CD4-positive, alpha-beta memory T cell (primary cell): ENCODE measurements at regions of chr12 and their contacts with region 1.

Region 1: GRCh38 chr12:131928711-131929580 is at the start of gene PUS1:
- DNase-seq: peak; percentile 94 to 95 (median 95)
- H3K4me3 ChIP-seq: peak within 1 kb of the TSS; percentile 42 to 81
- H3K4me3 Mint-ChIP-seq: peak within 1 kb of the TSS; percentile 89 to 98 (median 90)
- H3K27ac ChIP-seq: peak within 1 kb of the TSS; percentile 72
- H3K27ac Mint-ChIP-seq: peak within 1 kb of the TSS; percentile 87 to 93 (median 90)
- H3K4me1 ChIP-seq: peaks cover 16% of the 10 kb centered on the region
- H3K4me1 Mint-ChIP-seq: peaks cover 8 to 34% (median 23%) of the 10 kb centered on the region in 4 donors
- H3K27me3 ChIP-seq: no peaks in the 10 kb centered on the region
- H3K27me3 Mint-ChIP-seq: no peaks in the 10 kb centered on the region
- total RNA-seq, gene PUS1: 41.8 to 48.1 TPM

Region 2: DNA sequence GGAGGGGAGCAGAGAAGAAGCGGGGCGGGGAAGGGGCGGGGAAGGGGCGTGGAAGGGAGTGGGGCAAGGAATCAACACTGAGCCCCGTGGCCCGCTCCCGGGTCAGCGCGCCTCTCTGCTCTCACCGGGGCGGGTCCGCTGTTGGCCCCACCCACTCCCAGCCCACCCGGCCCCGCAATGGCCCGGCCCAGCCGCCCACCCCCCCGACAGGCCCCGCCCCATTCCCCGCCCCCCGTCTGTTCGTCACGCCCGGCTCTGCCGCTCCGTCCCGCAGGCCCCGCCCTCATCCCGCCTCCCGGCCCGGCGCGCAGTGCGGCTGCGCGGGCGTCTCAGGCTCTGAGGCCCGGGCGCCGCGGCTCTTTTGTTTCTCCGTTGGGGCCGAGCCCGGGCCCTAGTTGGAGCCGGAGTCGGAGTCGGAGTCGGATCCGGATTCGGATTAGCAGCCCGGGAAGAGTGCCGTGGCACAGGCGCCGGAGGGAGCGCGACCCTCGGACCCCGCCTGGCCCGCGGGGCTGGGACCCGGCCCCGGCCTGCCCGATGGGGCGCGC is 34.6 kb before region 1 on chr12 and contains the start of gene ULK1:
- CTCF ChIA-PET with region 1: no interaction called
- POLR2A ChIA-PET with region 1: interaction called, 28 read pairs
- intact Hi-C with region 1: loop called (anchors 1 kb)
- DNase-seq: peak; percentile 88 to 94 (median 91)
- H3K4me3 ChIP-seq: peak within 1 kb of the TSS; percentile 62 to 69
- H3K4me3 Mint-ChIP-seq: peak within 1 kb of the TSS; percentile 84 to 93 (median 89)
- H3K27ac ChIP-seq: peak within 1 kb of the TSS; percentile 52
- H3K27ac Mint-ChIP-seq: peak within 1 kb of the TSS; percentile 76 to 94 (median 87)
- H3K4me1 ChIP-seq: peaks cover 9% of the 10 kb centered on the region
- H3K4me1 Mint-ChIP-seq: peaks cover 6 to 35% (median 16%) of the 10 kb centered on the region in 4 donors
- H3K27me3 ChIP-seq: no peaks in the 10 kb centered on the region
- H3K27me3 Mint-ChIP-seq: no peaks in the 10 kb centered on the region
- total RNA-seq, gene ULK1: 45.8 to 55.7 TPM

Region 3: GRCh38 chr12:132144115-132144812 is 215.3 kb after region 1 on chr12 and contains the starts of genes DDX51 and NOC4L:
- CTCF ChIA-PET with region 1: no interaction called
- POLR2A ChIA-PET with region 1: no interaction called
- intact Hi-C with region 1: loop called (anchors 10 kb)
- DNase-seq: peak; percentile 92 to 97 (median 95)
- H3K4me3 ChIP-seq: peak within 1 kb of the TSS; percentile 58 to 81
- H3K4me3 Mint-ChIP-seq: peak within 1 kb of the TSS; percentile 89 to 99 (median 90)
- H3K27ac ChIP-seq: peak within 1 kb of the TSS; percentile 82
- H3K27ac Mint-ChIP-seq: peak within 1 kb of the TSS; percentile 94 to 99 (median 97)
- H3K4me1 ChIP-seq: peaks cover 27% of the 10 kb centered on the region
- H3K4me1 Mint-ChIP-seq: peaks cover 15 to 42% (median 27%) of the 10 kb centered on the region in 4 donors
- H3K27me3 ChIP-seq: no peaks in the 10 kb centered on the region
- H3K27me3 Mint-ChIP-seq: peaks cover 0 to 2% of the 10 kb centered on the region in 2 donors
- total RNA-seq, gene DDX51: 42.1 to 42.9 TPM
- total RNA-seq, gene NOC4L: 17.0 to 18.5 TPM